Activated CD4-positive, alpha-beta T cell treated with anti-CD3 and anti-CD28 coated beads, Interleukin-2, amount 10 ng/mL, durations not matched to agents 24 days and 14 days (primary cell): ENCODE measurements at regions of chr20 and their contacts with region 1.

Region 1: GRCh38 chr20:54475334-54476168 is at the start of gene DOK5:
- DNase-seq: peak; percentile 57
- H3K4me3 Mint-ChIP-seq: peak within 1 kb of the TSS; percentile 84
- H3K27ac Mint-ChIP-seq: peak within 1 kb of the TSS; percentile 79
- H3K4me1 Mint-ChIP-seq: peaks cover 28% of the 10 kb centered on the region
- H3K27me3 Mint-ChIP-seq: peaks cover 39% of the 10 kb centered on the region
- total RNA-seq, gene DOK5: 37.1 and 38.4 TPM in 2 replicates

Region 2: DNA sequence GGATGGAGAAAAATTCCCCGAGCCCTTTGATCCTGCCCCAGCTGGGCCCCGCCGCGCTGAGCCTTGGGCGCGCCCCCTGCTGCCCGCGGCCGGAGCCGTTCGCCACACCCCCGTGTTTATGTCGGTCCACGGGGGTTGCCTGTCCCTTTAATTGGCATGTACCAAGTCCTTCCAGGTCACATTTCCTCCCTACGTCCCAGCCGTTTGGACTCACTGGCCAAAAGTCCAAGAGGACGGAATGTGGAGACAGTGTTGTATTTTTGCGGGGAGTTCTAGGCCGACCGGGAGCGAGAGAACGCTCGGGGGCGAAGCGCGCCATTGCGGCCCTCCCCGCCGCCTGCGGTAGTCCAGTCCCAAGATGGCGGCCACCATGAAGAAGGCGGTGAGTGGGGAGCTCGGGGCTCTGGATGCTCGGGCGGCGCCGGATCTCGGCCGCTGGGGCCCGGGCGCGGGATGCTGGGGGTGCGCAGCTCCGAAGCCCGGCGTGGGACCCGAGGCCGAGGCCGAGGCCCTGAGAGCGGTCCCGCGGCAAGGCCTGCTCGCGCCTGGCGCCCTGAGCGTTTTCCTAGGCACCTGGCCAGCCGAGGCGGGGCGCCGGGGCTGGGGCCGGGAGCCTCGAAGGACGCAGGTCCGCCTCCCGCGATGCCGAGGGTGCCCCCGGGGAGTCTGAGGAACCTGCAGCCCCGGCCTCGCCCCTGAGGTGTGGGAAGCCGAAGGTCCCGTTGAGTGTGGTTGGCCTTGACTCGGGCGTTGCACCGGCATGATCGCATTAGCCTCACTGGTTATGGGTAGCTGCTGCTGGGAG is 267.6 kb before region 1 on chr20 and contains the start of gene PFDN4:
- intact Hi-C with region 1: loop called (anchors 5 kb)
- DNase-seq: peak; percentile 95
- H3K4me3 Mint-ChIP-seq: peak within 1 kb of the TSS; percentile 88
- H3K27ac Mint-ChIP-seq: peak within 1 kb of the TSS; percentile 100
- H3K4me1 Mint-ChIP-seq: peaks cover 39% of the 10 kb centered on the region
- H3K27me3 Mint-ChIP-seq: no peaks in the 10 kb centered on the region
- total RNA-seq, gene PFDN4: 72.2 and 80.5 TPM in 2 replicates

Region 3: DNA sequence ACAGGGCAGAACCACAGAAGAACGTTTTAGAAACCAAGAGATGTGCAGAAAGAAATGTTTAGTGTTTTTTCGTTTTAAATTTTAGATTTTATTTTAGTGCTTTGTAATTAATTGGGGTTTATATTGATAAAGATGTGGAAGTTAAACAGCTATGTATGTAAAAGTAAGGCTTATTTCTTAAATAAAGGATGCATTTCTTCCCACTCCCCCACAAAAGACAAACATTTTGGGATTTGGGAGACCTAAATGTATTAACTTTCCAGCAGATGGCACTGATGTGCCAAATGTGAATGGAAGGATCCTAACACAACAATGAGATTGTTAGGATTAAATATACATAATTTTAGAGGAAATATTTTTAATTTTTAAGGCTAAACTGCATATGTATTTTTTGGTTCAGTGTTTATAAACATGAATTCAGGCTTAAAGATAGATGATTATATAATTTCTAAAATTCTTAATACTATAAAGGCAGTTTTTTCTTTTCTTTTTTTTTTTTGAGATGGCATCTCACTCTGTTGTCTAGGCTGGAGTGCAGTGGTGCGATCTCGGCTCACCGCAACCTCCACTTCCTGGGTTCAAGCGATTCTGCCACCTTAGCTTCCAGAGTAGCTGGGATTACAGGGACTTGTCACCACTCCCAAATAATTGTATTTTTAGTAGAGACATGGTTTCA is 255.7 kb before region 1 on chr20:
- intact Hi-C with region 1: loop called (anchors 5 kb)
- DNase-seq: no peak
- H3K4me3 Mint-ChIP-seq: no peak overlapping the region
- H3K27ac Mint-ChIP-seq: no peak overlapping the region
- H3K4me1 Mint-ChIP-seq: peaks cover 20% of the 10 kb centered on the region
- H3K27me3 Mint-ChIP-seq: no peaks in the 10 kb centered on the region

Region 4: GRCh38 chr20:54320115-54320607 is 155.4 kb before region 1 on chr20:
- intact Hi-C with region 1: loop called (anchors 2 kb)
- DNase-seq: no peak
- H3K4me3 Mint-ChIP-seq: no peak overlapping the region
- H3K27ac Mint-ChIP-seq: peak overlapping the region; percentile 62
- H3K4me1 Mint-ChIP-seq: peaks cover 25% of the 10 kb centered on the region
- H3K27me3 Mint-ChIP-seq: no peaks in the 10 kb centered on the region

Region 5: GRCh38 chr20:54355641-54356280 is 119.8 kb before region 1 on chr20:
- intact Hi-C with region 1: loop called (anchors 10 kb)
- DNase-seq: peak; percentile 46
- H3K4me3 Mint-ChIP-seq: no peak overlapping the region
- H3K27ac Mint-ChIP-seq: no peak overlapping the region
- H3K4me1 Mint-ChIP-seq: peaks cover 2% of the 10 kb centered on the region
- H3K27me3 Mint-ChIP-seq: no peaks in the 10 kb centered on the region

Region 6: DNA sequence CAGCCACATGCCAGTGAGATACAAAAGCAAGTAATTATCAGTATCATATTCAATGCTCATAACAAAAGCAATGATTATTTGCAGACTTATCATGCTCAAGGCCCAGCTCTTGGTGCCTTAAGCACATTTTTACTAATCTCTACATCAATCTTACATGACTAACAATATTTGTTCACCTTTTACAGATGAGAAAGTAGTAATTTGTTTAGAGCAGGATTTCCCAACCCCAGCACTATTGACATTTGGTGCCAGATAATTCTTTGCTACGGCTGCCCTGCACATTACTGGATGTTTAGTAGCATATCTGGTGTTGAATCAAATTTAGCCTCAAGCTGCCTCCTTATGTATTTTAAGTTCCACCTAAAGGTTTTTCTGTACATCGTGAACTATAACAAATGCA is 19.1 kb before region 1 on chr20:
- intact Hi-C with region 1: no loop called
- DNase-seq: no peak
- H3K4me3 Mint-ChIP-seq: no peak overlapping the region
- H3K27ac Mint-ChIP-seq: no peak overlapping the region
- H3K4me1 Mint-ChIP-seq: no peaks in the 10 kb centered on the region
- H3K27me3 Mint-ChIP-seq: no peaks in the 10 kb centered on the region

Region 7: DNA sequence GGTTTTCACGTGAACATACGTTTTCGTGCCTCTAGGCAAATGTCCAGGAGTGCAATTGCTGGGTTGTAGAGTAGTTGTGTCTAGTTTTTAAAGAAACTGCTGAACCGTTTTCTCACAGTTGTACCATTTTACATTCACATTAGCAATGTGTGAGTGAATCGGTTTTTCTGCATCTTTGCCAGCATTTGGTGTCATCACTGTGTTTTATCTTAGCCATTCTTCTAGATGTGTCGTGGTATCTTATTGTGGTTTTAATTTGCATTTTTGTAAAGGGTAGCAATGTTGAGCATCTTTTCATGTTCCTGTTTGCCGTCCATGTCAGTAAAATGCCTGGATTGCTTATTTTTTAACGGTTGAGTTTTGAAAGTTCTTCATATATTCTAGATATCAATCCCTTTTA is 10.1 kb after region 1 on chr20:
- intact Hi-C with region 1: no loop called
- DNase-seq: no peak
- H3K4me3 Mint-ChIP-seq: no peak overlapping the region
- H3K27ac Mint-ChIP-seq: no peak overlapping the region
- H3K4me1 Mint-ChIP-seq: peaks cover 3% of the 10 kb centered on the region
- H3K27me3 Mint-ChIP-seq: no peaks in the 10 kb centered on the region

Region 8: GRCh38 chr20:54549658-54550326 is 74.2 kb after region 1 on chr20:
- intact Hi-C with region 1: loop called (anchors 1 kb)
- DNase-seq: no peak
- H3K4me3 Mint-ChIP-seq: no peak overlapping the region
- H3K27ac Mint-ChIP-seq: no peak overlapping the region
- H3K4me1 Mint-ChIP-seq: peaks cover 7% of the 10 kb centered on the region
- H3K27me3 Mint-ChIP-seq: no peaks in the 10 kb centered on the region

Region 9: GRCh38 chr20:54643791-54644190 is 168.2 kb after region 1 on chr20:
- intact Hi-C with region 1: no loop called
- DNase-seq: no peak
- H3K4me3 Mint-ChIP-seq: no peak overlapping the region
- H3K27ac Mint-ChIP-seq: no peak overlapping the region
- H3K4me1 Mint-ChIP-seq: peaks cover 2% of the 10 kb centered on the region
- H3K27me3 Mint-ChIP-seq: no peaks in the 10 kb centered on the region